ENCODE measurements at regions of chr14 and their contacts with region 1.

Region 1: GRCh38 chr14:68682166-68683103 is 110.4 kb downstream of the ZFP36L1 start:
- DNase-seq: no peak
- ATAC-seq: peak; percentile 53 to 78 (median 64)
- H3K4me3 ChIP-seq: no peak overlapping the region
- H3K27ac ChIP-seq: peak overlapping the region; percentile 68
- H3K4me1 ChIP-seq: peaks cover 40% of the 10 kb centered on the region
- H3K27me3 ChIP-seq: no peaks in the 10 kb centered on the region
- CTCF ChIP-seq: no peak

Region 2: DNA sequence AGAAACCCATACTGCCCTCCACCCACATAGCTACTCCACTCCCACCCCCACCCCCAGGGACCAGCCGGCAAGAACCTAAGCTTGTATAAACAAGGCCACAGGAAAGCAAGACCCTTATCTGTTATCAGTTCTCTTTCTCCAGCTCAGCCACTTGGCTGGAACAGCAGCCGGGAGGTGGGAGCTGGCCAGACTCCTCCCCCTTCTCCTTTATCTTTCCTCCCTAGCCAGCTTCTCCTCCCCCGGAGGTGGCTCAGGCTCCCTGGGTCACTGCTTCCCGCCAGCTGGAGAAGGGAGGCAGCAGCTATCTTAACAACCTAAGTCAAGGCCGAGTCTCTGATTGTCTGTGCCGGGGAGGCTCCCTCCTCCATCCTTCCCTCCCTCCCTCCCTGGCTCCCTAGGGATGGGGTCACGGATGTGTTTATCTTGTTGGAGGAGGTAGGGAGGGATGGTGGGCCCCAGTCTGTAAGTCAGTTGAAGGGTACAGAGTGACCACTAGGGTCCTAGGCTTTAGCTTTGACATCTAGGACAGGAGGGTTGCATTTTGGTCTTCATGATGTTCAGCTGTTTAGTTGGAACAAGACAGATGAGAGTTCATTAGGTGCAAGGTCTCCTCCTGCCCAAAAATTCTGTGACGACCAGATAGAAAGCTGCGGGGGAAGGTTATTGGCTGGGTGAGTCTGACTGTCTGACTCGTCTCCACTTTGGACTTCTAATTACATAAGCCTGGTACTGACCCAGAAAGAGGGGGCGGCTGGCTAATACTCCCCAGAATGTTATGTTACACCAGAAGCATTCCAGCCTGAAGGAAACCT is 80.7 kb after region 1 on chr14:
- intact Hi-C with region 1: no loop called
- DNase-seq: peak; percentile 53 to 67
- ATAC-seq: peak; percentile 34 to 49 (median 46)
- H3K4me3 ChIP-seq: no peak overlapping the region
- H3K27ac ChIP-seq: peak overlapping the region; percentile 41
- H3K4me1 ChIP-seq: peaks cover 4% of the 10 kb centered on the region
- H3K27me3 ChIP-seq: no peaks in the 10 kb centered on the region
- CTCF ChIP-seq: no peak

Region 3: GRCh38 chr14:68788996-68789820 is 106.8 kb after region 1 on chr14:
- intact Hi-C with region 1: loop called in 1 of 2 experiments (anchors 5 kb)
- DNase-seq: peak; percentile 88 to 92
- ATAC-seq: peak; percentile 22 to 32 (median 28)
- H3K4me3 ChIP-seq: peak overlapping the region; percentile 91
- H3K27ac ChIP-seq: peak overlapping the region; percentile 100
- H3K4me1 ChIP-seq: peaks cover 9% of the 10 kb centered on the region
- H3K27me3 ChIP-seq: no peaks in the 10 kb centered on the region
- CTCF ChIP-seq: peak; percentile 67

Region 4: GRCh38 chr14:69335371-69335771 is 652.9 kb after region 1 on chr14:
- intact Hi-C with region 1: no loop called
- DNase-seq: no peak
- ATAC-seq: no peak
- H3K4me3 ChIP-seq: no peak overlapping the region
- H3K27ac ChIP-seq: no peak overlapping the region
- H3K4me1 ChIP-seq: no peaks in the 10 kb centered on the region
- H3K27me3 ChIP-seq: no peaks in the 10 kb centered on the region
- CTCF ChIP-seq: no peak

Measured in psoas muscle (tissue), 8 donors.